Activated CD4-positive, alpha-beta T cell treated with anti-CD3 and anti-CD28 coated beads for 36 hours (primary cell): ENCODE measurements at regions of chrX and their contacts with region 1.

Region 1: DNA sequence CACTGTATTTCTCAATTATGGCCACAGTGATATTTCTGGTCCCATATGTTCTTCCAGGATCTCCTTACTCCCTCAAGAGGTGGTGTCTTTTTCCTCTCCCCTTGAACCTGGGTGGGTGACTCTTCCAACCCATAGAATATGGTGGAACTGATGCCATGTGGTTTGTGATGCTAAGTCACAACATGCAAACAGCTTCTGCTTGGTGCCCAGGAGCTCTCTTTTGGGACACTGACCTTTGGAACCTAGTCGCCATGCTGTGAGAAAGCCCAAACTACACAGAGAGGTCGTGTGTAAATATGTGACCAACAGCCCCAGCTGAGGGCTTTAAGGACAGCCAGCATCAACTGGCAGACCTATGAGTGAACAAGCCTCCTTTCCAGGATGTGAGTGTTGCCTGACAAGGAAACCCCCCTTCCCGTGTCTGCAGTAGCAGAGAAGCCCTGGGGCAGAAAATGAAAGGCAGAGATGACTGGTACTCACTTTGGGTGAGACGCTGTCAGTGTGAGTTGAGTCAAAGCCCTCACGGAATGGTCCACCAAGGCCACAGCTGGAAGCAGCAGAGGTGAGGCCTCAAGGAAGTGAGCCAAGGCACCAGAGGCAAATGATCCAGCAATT is 223.4 kb downstream of the BCOR start:
- DNase-seq: peak; percentile 84
- ATAC-seq: peak; percentile 80
- H3K4me3 Mint-ChIP-seq: no peak overlapping the region
- H3K27ac Mint-ChIP-seq: peak overlapping the region; percentile 95
- H3K4me1 Mint-ChIP-seq: peaks cover 53% of the 10 kb centered on the region
- H3K27me3 Mint-ChIP-seq: no peaks in the 10 kb centered on the region

Region 2: DNA sequence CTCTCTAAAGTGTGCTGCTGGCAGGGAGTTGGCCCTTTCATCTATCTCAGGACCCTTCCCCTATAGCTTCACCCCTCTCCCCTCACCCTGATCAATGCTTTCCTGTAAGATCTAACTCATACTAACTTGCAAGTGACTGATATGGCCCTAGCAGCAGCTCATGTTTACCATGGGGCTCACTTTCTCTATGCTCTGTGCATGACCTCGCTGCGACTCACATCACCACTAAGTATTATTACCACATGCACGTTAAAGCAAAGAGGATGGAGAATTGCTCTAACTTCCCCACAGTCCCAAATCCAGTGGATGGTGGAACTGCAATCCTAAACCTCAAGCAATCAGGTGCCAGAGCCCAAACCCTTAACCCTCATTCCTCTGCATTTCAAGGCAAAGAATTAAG is 446.4 kb before region 1 on chrX:
- CTCF ChIA-PET with region 1: no interaction called
- POLR2A ChIA-PET with region 1: no interaction called
- intact Hi-C with region 1: loop called in 1 of 2 experiments (anchors 10 kb)
- DNase-seq: peak; percentile 73
- ATAC-seq: peak; percentile 71
- H3K4me3 Mint-ChIP-seq: no peak overlapping the region
- H3K27ac Mint-ChIP-seq: peak overlapping the region; percentile 82
- H3K4me1 Mint-ChIP-seq: peaks cover 73% of the 10 kb centered on the region
- H3K27me3 Mint-ChIP-seq: no peaks in the 10 kb centered on the region

Region 3: GRCh38 chrX:39814391-39814790 is 59.9 kb before region 1 on chrX:
- CTCF ChIA-PET with region 1: no interaction called
- POLR2A ChIA-PET with region 1: no interaction called
- intact Hi-C with region 1: loop called (anchors 5 kb)
- DNase-seq: peak; percentile 58
- ATAC-seq: no peak
- H3K4me3 Mint-ChIP-seq: no peak overlapping the region
- H3K27ac Mint-ChIP-seq: no peak overlapping the region
- H3K4me1 Mint-ChIP-seq: peaks cover 29% of the 10 kb centered on the region
- H3K27me3 Mint-ChIP-seq: no peaks in the 10 kb centered on the region

Region 4: GRCh38 chrX:40006106-40007017 is 132.1 kb after region 1 on chrX:
- CTCF ChIA-PET with region 1: no interaction called
- POLR2A ChIA-PET with region 1: no interaction called
- intact Hi-C with region 1: loop called (anchors 5 kb)
- DNase-seq: peak; percentile 65
- ATAC-seq: peak; percentile 60
- H3K4me3 Mint-ChIP-seq: no peak overlapping the region
- H3K27ac Mint-ChIP-seq: no peak overlapping the region
- H3K4me1 Mint-ChIP-seq: peaks cover 25% of the 10 kb centered on the region
- H3K27me3 Mint-ChIP-seq: peaks cover 32% of the 10 kb centered on the region

Region 5: GRCh38 chrX:40013266-40014195 is 139.2 kb after region 1 on chrX:
- CTCF ChIA-PET with region 1: no interaction called
- POLR2A ChIA-PET with region 1: no interaction called
- intact Hi-C with region 1: loop called (anchors 5 kb)
- DNase-seq: peak; percentile 58
- ATAC-seq: peak; percentile 35
- H3K4me3 Mint-ChIP-seq: peak overlapping the region; percentile 63
- H3K27ac Mint-ChIP-seq: peak overlapping the region; percentile 31
- H3K4me1 Mint-ChIP-seq: peaks cover 25% of the 10 kb centered on the region
- H3K27me3 Mint-ChIP-seq: peaks cover 16% of the 10 kb centered on the region

Region 6: DNA sequence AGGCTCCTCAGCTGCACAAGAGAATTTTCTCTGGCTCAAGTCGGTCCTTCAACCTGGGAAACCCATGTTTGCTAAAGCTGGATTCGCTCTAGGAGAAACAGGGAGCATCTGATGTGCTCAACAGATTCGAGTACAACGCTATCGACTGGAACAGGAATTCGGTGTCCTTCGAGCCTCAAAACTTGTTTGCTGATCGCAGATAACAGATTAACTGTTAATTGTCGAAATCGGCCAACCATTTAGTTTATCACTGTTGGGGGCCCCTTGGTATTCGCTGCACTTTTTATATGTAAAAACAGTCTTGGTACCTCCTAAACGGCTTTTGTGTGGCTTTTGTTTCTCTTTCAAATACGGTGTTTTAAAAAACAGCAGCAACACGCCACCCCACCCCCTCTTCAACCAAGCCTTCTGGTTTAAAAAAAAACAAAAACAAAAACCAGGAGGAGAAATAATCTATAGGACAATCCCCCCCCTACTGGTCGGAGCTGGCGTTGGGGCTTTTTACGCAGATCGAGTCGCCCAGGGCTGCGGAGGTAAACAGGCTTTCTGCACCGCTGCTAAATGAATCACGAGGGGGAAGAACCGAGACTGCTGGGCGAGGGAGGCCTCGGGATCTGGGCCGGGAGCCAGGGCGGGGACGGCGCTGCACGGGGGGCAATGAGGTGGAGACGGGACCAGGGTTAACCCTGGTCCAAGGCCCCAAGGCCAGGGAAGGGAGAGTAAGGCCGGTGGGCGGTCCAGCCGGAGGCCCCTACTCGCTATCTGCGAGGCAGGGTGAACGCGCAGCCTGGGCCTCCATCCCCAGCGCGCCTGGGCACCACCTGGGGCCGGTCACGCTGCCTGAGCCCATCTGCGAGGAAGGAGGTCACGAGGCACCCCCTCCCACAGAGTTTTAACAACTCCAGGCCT is 295.1 kb after region 1 on chrX:
- CTCF ChIA-PET with region 1: no interaction called
- POLR2A ChIA-PET with region 1: no interaction called
- intact Hi-C with region 1: loop called in 1 of 2 experiments (anchors 5 kb)
- DNase-seq: peak; percentile 89
- ATAC-seq: peak; percentile 67
- H3K4me3 Mint-ChIP-seq: peak overlapping the region; percentile 80
- H3K27ac Mint-ChIP-seq: peak overlapping the region; percentile 90
- H3K4me1 Mint-ChIP-seq: peaks cover 37% of the 10 kb centered on the region
- H3K27me3 Mint-ChIP-seq: no peaks in the 10 kb centered on the region

Region 7: DNA sequence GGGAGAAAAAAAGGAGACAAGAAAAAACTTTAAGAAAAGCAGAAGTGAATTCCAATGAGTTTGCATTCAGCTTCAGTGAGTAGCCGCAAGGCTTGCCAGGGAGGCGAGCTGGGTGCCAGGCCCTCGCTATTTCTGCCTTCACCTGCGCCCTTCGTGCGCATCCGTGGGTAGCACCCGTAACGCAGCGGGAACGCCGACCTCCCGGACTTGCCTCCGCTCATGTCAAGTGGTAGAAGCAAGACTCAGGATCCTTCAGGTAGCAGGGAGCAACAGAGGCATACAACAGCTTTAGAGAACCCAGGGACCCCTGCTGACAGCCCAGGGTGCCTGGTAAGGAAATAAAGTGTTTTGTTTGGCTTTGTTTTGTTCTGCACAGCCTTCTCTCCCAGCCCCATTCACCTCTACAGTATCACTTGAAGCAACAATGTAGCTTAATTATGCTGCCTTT is 363.4 kb after region 1 on chrX:
- CTCF ChIA-PET with region 1: no interaction called
- POLR2A ChIA-PET with region 1: no interaction called
- intact Hi-C with region 1: no loop called
- DNase-seq: no peak
- ATAC-seq: no peak
- H3K4me3 Mint-ChIP-seq: no peak overlapping the region
- H3K27ac Mint-ChIP-seq: no peak overlapping the region
- H3K4me1 Mint-ChIP-seq: no peaks in the 10 kb centered on the region
- H3K27me3 Mint-ChIP-seq: peaks cover 3% of the 10 kb centered on the region